CD4-positive, alpha-beta memory T cell (primary cell): ENCODE measurements at regions of chr9 and their contacts with region 1.

Region 1: DNA sequence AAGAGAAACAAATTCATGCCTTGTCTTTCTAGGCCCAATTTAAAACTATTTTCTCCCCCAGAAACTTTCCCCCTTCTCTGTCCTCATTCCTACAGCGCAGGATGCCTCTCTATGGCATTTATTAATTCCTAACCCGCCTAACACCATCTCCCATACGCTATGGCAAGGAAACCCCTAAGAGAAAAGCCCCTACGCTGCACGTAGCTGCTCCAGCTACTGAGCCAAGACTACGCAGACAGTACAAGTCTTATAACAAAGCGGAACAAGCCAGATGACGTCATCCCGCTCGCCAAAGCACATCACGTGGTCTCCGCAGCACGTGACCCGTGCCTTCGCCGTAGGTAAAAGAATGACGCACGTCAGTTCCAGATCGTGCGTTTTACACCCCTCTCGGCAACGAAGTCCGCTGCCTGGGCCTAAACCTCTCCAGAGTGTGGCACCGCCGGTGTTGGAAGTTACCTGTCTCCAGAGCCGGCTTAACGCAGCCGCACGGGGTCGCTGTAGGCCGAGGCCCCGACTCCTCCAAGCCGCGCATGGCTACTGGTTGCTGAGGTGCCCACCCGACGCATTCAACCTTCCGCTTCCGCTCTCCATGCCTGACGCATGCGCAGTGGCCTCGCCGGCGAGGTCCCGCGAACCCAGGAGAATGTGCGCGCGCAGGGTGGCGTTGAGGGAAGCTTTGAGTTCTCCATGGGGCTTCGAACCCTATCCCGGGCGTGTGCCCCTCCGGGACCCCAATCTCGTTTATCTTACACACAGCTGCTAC is at the start of gene TRMO:
- DNase-seq: peak; percentile 97 to 100 (median 98)
- H3K4me3 ChIP-seq: peak within 1 kb of the TSS; percentile 64 to 82
- H3K4me3 Mint-ChIP-seq: peak within 1 kb of the TSS; percentile 85 to 100 (median 94)
- H3K27ac ChIP-seq: peak within 1 kb of the TSS; percentile 90
- H3K27ac Mint-ChIP-seq: peak within 1 kb of the TSS; percentile 91 to 100 (median 100)
- H3K4me1 ChIP-seq: peaks cover 53% of the 10 kb centered on the region
- H3K4me1 Mint-ChIP-seq: peaks cover 26 to 54% (median 41%) of the 10 kb centered on the region in 4 donors
- H3K27me3 ChIP-seq: no peaks in the 10 kb centered on the region
- H3K27me3 Mint-ChIP-seq: peaks cover 0 to 1% of the 10 kb centered on the region in 2 donors
- total RNA-seq, gene TRMO: 51.6 to 59.5 TPM

Region 2: DNA sequence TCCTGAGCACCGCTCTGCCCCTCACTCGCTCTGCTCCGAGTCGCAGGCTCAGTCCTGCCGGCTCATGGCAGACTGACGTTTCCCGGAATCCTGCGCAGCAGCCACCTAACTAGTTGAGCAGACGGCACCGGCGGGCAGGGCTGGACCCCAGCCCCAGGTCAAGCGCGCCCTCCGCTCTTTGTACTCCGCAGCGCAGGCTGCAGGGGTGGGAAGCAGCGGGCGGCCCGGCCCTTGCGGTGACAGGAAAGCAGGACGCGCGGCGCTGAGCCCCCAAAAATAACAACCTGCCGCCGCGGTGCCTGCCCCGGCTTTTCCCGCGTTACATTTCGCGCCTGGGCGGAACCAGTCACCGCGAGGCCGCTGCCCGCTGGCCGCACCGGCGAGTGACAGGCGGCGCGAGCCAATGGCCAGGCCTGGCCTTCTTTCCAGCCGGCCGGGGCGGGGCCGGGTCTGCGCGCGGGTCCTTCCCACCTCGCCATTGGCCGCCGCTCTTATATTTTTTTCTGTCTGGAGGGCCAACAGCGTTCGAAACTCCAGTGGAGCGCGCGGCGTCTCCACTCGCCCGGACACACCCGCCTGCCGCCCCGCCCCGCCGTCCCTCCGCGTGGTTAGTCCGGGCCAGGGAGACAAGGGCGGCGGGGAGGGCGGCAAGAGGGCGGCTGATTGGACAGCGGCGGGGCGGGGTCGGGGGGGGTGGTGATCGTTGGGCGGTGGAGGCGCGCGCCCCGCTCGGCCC is 1503.9 kb before region 1 on chr9 and contains the start of gene ZNF367:
- CTCF ChIA-PET with region 1: no interaction called
- POLR2A ChIA-PET with region 1: no interaction called
- intact Hi-C with region 1: loop called (anchors 2 kb)
- DNase-seq: peak; percentile 90 to 92 (median 92)
- H3K4me3 ChIP-seq: peak within 1 kb of the TSS; percentile 86 to 89
- H3K4me3 Mint-ChIP-seq: peak within 1 kb of the TSS; percentile 90 to 98 (median 92)
- H3K27ac ChIP-seq: peak within 1 kb of the TSS; percentile 81
- H3K27ac Mint-ChIP-seq: peak within 1 kb of the TSS; percentile 92 to 99 (median 97)
- H3K4me1 ChIP-seq: peaks cover 49% of the 10 kb centered on the region
- H3K4me1 Mint-ChIP-seq: peaks cover 24 to 49% (median 32%) of the 10 kb centered on the region in 4 donors
- H3K27me3 ChIP-seq: no peaks in the 10 kb centered on the region
- H3K27me3 Mint-ChIP-seq: no peaks in the 10 kb centered on the region
- total RNA-seq, gene ZNF367: 5.1 to 5.4 TPM

Region 3: GRCh38 chr9:96449845-96450612 is 1472.1 kb before region 1 on chr9 and contains the start of gene HABP4:
- CTCF ChIA-PET with region 1: no interaction called
- POLR2A ChIA-PET with region 1: no interaction called
- intact Hi-C with region 1: no loop called
- DNase-seq: peak; percentile 93 to 94 (median 94)
- H3K4me3 ChIP-seq: peak within 1 kb of the TSS; percentile 48 to 72
- H3K4me3 Mint-ChIP-seq: peak within 1 kb of the TSS; percentile 91 to 96 (median 96)
- H3K27ac ChIP-seq: peak within 1 kb of the TSS; percentile 59
- H3K27ac Mint-ChIP-seq: peak within 1 kb of the TSS; percentile 82 to 98 (median 94)
- H3K4me1 ChIP-seq: peaks cover 23% of the 10 kb centered on the region
- H3K4me1 Mint-ChIP-seq: peaks cover 16 to 32% (median 21%) of the 10 kb centered on the region in 4 donors
- H3K27me3 ChIP-seq: no peaks in the 10 kb centered on the region
- H3K27me3 Mint-ChIP-seq: no peaks in the 10 kb centered on the region
- total RNA-seq, gene HABP4: 35.5 to 36.6 TPM

Region 4: GRCh38 chr9:97890038-97890437 is 32.1 kb before region 1 on chr9:
- CTCF ChIA-PET with region 1: interaction called, 100 read pairs
- POLR2A ChIA-PET with region 1: interaction called, 47 read pairs
- intact Hi-C with region 1: loop called (anchors 1 kb)
- DNase-seq: peak; percentile 52 to 61 (median 56)
- H3K4me3 ChIP-seq: no peak overlapping the region
- H3K4me3 Mint-ChIP-seq: no peak overlapping the region
- H3K27ac ChIP-seq: no peak overlapping the region
- H3K27ac Mint-ChIP-seq: peak overlapping the region in 3 of 7 donors; percentile 32 to 63 (median 58)
- H3K4me1 ChIP-seq: peaks cover 9% of the 10 kb centered on the region
- H3K4me1 Mint-ChIP-seq: peaks cover 2 to 13% (median 5%) of the 10 kb centered on the region in 4 donors
- H3K27me3 ChIP-seq: no peaks in the 10 kb centered on the region
- H3K27me3 Mint-ChIP-seq: no peaks in the 10 kb centered on the region

Region 5: GRCh38 chr9:97938081-97938644 is 16.0 kb after region 1 on chr9 and contains the start of gene HEMGN:
- CTCF ChIA-PET with region 1: interaction called, 61 read pairs
- POLR2A ChIA-PET with region 1: interaction called, 22 read pairs
- intact Hi-C with region 1: loop called (anchors 1 kb)
- DNase-seq: peak; percentile 59 to 80 (median 74)
- H3K4me3 ChIP-seq: no peak within 1 kb of the TSS
- H3K4me3 Mint-ChIP-seq: peak within 1 kb of the TSS in 7 of 8 donors; percentile 31 to 79 (median 51)
- H3K27ac ChIP-seq: peak within 1 kb of the TSS; percentile 38
- H3K27ac Mint-ChIP-seq: peak within 1 kb of the TSS; percentile 67 to 93 (median 89)
- H3K4me1 ChIP-seq: peaks cover 32% of the 10 kb centered on the region
- H3K4me1 Mint-ChIP-seq: peaks cover 20 to 37% (median 28%) of the 10 kb centered on the region in 4 donors
- H3K27me3 ChIP-seq: no peaks in the 10 kb centered on the region
- H3K27me3 Mint-ChIP-seq: no peaks in the 10 kb centered on the region
- total RNA-seq, gene HEMGN: 1.6 to 2.3 TPM

Region 6: GRCh38 chr9:97982683-97983588 is 60.8 kb after region 1 on chr9 and contains the start of gene ANP32B:
- CTCF ChIA-PET with region 1: interaction called, 61 read pairs
- POLR2A ChIA-PET with region 1: interaction called, 176 read pairs
- intact Hi-C with region 1: loop called (anchors 1 kb)
- DNase-seq: peak; percentile 92 to 95 (median 94)
- H3K4me3 ChIP-seq: peak within 1 kb of the TSS; percentile 54 to 81
- H3K4me3 Mint-ChIP-seq: peak within 1 kb of the TSS; percentile 77 to 94 (median 86)
- H3K27ac ChIP-seq: peak within 1 kb of the TSS; percentile 85
- H3K27ac Mint-ChIP-seq: peak within 1 kb of the TSS; percentile 81 to 91 (median 89)
- H3K4me1 ChIP-seq: peaks cover 37% of the 10 kb centered on the region
- H3K4me1 Mint-ChIP-seq: peaks cover 17 to 47% (median 31%) of the 10 kb centered on the region in 4 donors
- H3K27me3 ChIP-seq: no peaks in the 10 kb centered on the region
- H3K27me3 Mint-ChIP-seq: no peaks in the 10 kb centered on the region
- total RNA-seq, gene ANP32B: 164 to 168 TPM

Region 7: GRCh38 chr9:98056269-98057137 is 134.4 kb after region 1 on chr9 and contains the start of gene NANS:
- CTCF ChIA-PET with region 1: interaction called, 16 read pairs
- POLR2A ChIA-PET with region 1: interaction called, 34 read pairs
- intact Hi-C with region 1: loop called (anchors 1 kb)
- DNase-seq: peak; percentile 88 to 94 (median 90)
- H3K4me3 ChIP-seq: peak within 1 kb of the TSS; percentile 56 to 76
- H3K4me3 Mint-ChIP-seq: peak within 1 kb of the TSS; percentile 96 to 100 (median 99)
- H3K27ac ChIP-seq: peak within 1 kb of the TSS; percentile 82
- H3K27ac Mint-ChIP-seq: peak within 1 kb of the TSS; percentile 90 to 99 (median 99)
- H3K4me1 ChIP-seq: peaks cover 22% of the 10 kb centered on the region
- H3K4me1 Mint-ChIP-seq: peaks cover 12 to 32% (median 22%) of the 10 kb centered on the region in 4 donors
- H3K27me3 ChIP-seq: no peaks in the 10 kb centered on the region
- H3K27me3 Mint-ChIP-seq: no peaks in the 10 kb centered on the region
- total RNA-seq, gene NANS: 22.1 to 23.2 TPM

Region 8: DNA sequence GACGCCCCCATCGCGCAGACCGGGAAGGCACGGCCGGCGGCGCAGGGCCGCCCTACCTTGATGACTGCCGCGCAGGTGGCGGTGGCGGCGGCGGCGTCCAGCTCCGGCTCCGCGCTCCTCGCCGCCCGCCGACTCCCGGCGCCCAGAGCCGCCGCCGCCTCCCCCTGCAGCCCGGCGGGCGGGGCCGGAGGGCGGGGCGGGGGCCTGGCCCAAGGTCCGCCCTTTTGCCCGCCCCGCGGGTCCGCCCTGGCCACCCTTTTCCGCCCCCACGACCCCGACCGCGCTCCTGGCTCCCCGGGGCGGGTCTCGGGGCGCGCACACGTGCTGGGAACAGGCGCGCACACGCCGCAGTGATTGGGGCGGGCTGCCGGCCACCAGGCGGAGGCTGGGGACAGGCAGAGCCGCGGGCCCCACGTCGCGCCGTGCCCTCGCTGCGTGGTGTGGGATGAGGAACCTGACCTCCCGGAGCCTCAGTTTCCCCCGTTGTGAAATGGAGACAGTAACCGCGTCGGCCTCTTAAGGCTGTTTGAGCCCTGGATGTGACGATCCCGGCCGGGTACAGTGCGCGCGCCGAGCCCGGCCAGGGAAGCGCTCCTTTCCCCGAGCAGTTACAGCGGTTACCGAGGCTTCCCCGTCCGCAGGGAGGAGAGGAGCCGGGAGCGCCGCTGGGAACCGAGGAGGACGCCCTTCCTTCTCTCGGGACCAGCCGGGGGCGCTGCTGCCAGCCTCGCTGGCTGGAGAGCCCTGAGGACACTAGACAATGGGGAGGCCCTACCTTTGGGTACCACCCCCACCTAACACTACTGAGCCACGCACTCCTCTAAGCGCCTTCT is 270.6 kb after region 1 on chr9 and contains the start of gene CORO2A:
- CTCF ChIA-PET with region 1: interaction called, 3 read pairs
- POLR2A ChIA-PET with region 1: interaction called, 5 read pairs
- intact Hi-C with region 1: loop called (anchors 2 kb)
- DNase-seq: peak; percentile 64 to 72 (median 70)
- H3K4me3 ChIP-seq: peak within 1 kb of the TSS; percentile 52 to 67
- H3K4me3 Mint-ChIP-seq: peak within 1 kb of the TSS; percentile 83 to 95 (median 91)
- H3K27ac ChIP-seq: peak within 1 kb of the TSS; percentile 53
- H3K27ac Mint-ChIP-seq: peak within 1 kb of the TSS; percentile 63 to 91 (median 85)
- H3K4me1 ChIP-seq: peaks cover 44% of the 10 kb centered on the region
- H3K4me1 Mint-ChIP-seq: peaks cover 16 to 50% (median 37%) of the 10 kb centered on the region in 4 donors
- H3K27me3 ChIP-seq: no peaks in the 10 kb centered on the region
- H3K27me3 Mint-ChIP-seq: no peaks in the 10 kb centered on the region
- total RNA-seq, gene CORO2A: 8.3 to 8.6 TPM